ENCODE measurements at regions of chr16 and their contacts with region 1.

Region 1: GRCh38 chr16:63361032-63361624 is 1324.9 kb upstream of the CDH8 start:
- DNase-seq: peak; percentile 18 to 36 (median 22)
- ATAC-seq: no peak
- H3K4me3 ChIP-seq: no peak overlapping the region
- H3K27ac ChIP-seq: no peak overlapping the region
- H3K4me1 ChIP-seq: no peaks in the 10 kb centered on the region
- H3K27me3 ChIP-seq: no peaks in the 10 kb centered on the region
- CTCF ChIP-seq: peak; percentile 25 to 69 (median 55); a peak in 5 of 6 replicates
- EP300 ChIP-seq: no peak
- POLR2A ChIP-seq: no peak
- RAD21 ChIP-seq: peak; percentile 49 to 63

Region 2: DNA sequence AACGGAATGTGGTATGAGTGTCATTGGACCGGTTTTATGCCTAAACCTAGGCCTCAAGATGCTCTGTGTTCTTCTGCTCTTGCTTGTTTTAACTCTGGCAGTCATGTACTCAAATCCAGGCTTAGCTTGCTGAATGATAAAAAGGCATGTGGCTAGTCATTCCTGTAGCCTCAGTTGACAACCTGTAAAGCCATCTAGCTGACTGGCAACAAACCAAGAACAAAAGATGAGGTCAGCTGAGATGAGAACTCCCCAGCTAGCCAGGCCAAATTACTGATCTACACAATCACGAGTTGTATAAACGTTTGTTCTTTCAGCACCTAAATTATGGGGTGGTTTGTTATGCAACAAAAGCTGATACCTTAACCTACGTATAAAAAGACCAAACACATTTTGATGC is 81.1 kb after region 1 on chr16:
- CTCF ChIA-PET with region 1: no interaction called
- POLR2A ChIA-PET with region 1: no interaction called
- in situ Hi-C with region 1: no loop called
- intact Hi-C with region 1: no loop called
- DNase-seq: no peak
- ATAC-seq: no peak
- H3K4me3 ChIP-seq: no peak overlapping the region
- H3K27ac ChIP-seq: no peak overlapping the region
- H3K4me1 ChIP-seq: no peaks in the 10 kb centered on the region
- H3K27me3 ChIP-seq: no peaks in the 10 kb centered on the region
- CTCF ChIP-seq: no peak
- EP300 ChIP-seq: no peak
- POLR2A ChIP-seq: no peak
- RAD21 ChIP-seq: no peak

Region 3: DNA sequence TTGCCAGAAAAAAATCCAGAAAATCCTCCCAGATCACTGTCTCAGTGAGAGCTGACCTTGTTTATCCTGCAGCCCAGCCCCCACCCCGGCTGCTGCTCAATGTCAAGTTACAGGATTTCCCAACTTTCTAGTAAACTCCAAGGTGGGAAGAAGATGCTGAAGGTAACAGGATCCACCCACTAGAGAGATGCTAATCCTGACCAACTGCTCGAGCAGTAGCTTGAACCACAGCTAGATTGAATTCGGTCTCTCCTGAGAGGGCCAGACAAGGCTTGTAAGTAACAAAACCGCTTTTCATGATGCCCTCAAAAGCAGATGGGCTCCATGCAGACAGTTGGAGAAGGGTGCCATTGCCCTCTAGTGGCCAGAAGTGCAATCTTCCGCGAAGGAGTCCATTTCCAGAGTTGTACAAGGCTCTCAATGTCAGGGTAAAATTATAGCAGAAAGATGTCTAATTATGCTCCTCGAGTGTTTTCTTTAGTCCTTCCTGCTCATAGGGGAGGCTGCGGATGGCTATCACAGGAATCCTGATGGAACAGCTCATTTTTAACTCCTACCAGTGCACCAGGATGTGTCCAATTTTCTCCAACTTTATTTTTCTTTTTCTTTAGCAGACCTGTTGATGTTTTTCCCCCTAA is 1756.8 kb after region 1 on chr16:
- CTCF ChIA-PET with region 1: no interaction called
- POLR2A ChIA-PET with region 1: no interaction called
- in situ Hi-C with region 1: no loop called
- intact Hi-C with region 1: loop called (anchors 1 kb)
- DNase-seq: peak; percentile 33 to 54 (median 36)
- ATAC-seq: peak; percentile 80
- H3K4me3 ChIP-seq: no peak overlapping the region
- H3K27ac ChIP-seq: no peak overlapping the region
- H3K4me1 ChIP-seq: no peaks in the 10 kb centered on the region; a peak in 1 of 5 replicates
- H3K27me3 ChIP-seq: no peaks in the 10 kb centered on the region
- CTCF ChIP-seq: peak; percentile 65 to 83 (median 75)
- EP300 ChIP-seq: no peak
- POLR2A ChIP-seq: no peak
- RAD21 ChIP-seq: peak; percentile 52 to 78

Measured in K562 (cell line).